Activated naive CD4-positive, alpha-beta T cell treated with anti-CD3 and anti-CD28 coated beads, Interleukin-2, amount 10 ng/mL, durations not matched to agents 7 days and 5 days (primary cell): ENCODE measurements at regions of chr18 and their contacts with region 1.

Region 1: DNA sequence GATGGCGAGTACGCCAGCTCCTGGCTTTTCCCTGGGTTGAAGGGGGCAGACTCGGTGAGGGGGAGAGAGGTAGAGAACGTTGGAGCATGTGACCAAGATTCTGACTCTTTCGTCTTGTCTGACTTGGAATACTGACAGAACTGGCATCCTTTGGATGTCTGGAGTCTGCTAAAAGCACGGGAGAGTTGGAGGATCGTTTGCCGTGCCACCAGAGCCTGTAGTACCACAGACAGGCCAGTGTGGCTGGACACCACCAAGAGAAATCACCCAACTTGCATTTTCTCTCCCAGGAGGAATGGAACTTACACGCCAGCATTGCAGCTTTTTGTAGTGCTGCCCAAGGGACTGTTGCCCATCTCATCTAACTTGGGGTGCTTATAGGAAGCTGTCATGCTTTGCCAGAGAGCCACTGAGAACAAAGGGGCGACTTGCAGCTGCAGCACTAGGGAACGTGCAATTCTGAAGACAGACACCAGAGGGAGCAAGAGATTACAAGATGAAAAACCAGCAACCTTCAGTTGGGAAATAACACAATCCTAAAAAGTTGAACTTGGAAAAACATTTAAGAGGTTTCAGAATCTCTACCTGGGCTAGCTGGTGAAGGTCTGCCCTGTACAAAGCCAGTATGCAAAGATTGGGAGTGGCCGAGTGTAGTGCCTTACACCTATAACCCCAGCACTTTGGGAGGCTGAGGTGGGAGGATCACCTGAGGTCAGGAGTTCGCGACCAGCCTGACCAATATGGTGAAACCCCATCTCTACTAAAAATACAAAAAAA is 24.1 kb downstream of the PSMG2 start:
- DNase-seq: peak; percentile 68
- H3K4me3 Mint-ChIP-seq: no peak overlapping the region
- H3K27ac Mint-ChIP-seq: no peak overlapping the region
- H3K4me1 Mint-ChIP-seq: peaks cover 2% of the 10 kb centered on the region
- H3K27me3 Mint-ChIP-seq: no peaks in the 10 kb centered on the region

Region 2: GRCh38 chr18:12470382-12471075 is 256.4 kb before region 1 on chr18:
- CTCF ChIA-PET with region 1: no interaction called
- DNase-seq: no peak
- H3K4me3 Mint-ChIP-seq: no peak overlapping the region
- H3K27ac Mint-ChIP-seq: no peak overlapping the region
- H3K4me1 Mint-ChIP-seq: no peaks in the 10 kb centered on the region
- H3K27me3 Mint-ChIP-seq: peaks cover 5% of the 10 kb centered on the region

Region 3: DNA sequence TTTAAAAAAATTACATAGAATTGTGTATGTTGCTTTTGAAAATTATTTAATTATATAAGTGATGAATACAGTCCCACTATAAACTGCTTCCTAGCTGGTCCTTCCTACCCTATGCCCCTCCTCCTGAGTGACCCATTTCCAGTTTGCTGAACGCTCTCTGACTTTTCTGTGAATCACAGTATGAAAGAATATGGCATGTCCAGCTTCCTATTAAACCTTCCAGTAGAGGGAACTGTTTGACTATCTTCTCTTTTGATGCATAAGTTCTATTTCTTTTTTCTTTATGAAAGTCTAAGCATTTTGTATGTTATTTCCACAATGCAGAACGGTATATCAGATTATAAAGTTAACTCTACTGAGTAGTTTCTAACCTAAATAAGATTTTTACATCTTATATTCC is 17.1 kb after region 1 on chr18:
- CTCF ChIA-PET with region 1: interaction called, 13 read pairs
- DNase-seq: no peak
- H3K4me3 Mint-ChIP-seq: no peak overlapping the region
- H3K27ac Mint-ChIP-seq: no peak overlapping the region
- H3K4me1 Mint-ChIP-seq: peaks cover 2% of the 10 kb centered on the region
- H3K27me3 Mint-ChIP-seq: peaks cover 9% of the 10 kb centered on the region

Region 4: DNA sequence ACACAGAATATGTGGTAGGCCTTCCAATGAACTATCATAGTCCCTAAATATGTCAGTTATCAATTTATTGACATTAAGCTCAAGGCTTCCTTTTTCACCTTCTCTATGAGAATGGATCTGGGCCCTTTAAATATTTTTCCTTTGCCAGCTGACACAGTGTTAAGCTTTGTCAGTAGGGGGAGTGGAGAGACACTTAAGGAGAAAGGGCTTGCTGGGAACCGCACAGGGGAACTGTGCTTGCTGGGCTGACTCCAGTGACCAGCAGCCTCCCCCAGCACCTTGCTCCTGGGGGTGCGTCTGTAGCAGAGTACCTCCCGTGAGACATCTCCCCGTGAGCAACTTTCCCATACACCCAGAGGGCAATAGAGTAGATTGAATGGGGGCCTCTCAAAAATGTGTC is 163.5 kb after region 1 on chr18:
- CTCF ChIA-PET with region 1: interaction called, 37 read pairs
- DNase-seq: no peak
- H3K4me3 Mint-ChIP-seq: no peak overlapping the region
- H3K27ac Mint-ChIP-seq: no peak overlapping the region
- H3K4me1 Mint-ChIP-seq: peaks cover 13% of the 10 kb centered on the region
- H3K27me3 Mint-ChIP-seq: peaks cover 33% of the 10 kb centered on the region

Region 5: GRCh38 chr18:12904012-12904516 is 177.1 kb after region 1 on chr18:
- CTCF ChIA-PET with region 1: interaction called, 11 read pairs
- DNase-seq: peak; percentile 78
- H3K4me3 Mint-ChIP-seq: peak overlapping the region; percentile 42
- H3K27ac Mint-ChIP-seq: peak overlapping the region; percentile 77
- H3K4me1 Mint-ChIP-seq: peaks cover 10% of the 10 kb centered on the region
- H3K27me3 Mint-ChIP-seq: peaks cover 36% of the 10 kb centered on the region

Region 6: DNA sequence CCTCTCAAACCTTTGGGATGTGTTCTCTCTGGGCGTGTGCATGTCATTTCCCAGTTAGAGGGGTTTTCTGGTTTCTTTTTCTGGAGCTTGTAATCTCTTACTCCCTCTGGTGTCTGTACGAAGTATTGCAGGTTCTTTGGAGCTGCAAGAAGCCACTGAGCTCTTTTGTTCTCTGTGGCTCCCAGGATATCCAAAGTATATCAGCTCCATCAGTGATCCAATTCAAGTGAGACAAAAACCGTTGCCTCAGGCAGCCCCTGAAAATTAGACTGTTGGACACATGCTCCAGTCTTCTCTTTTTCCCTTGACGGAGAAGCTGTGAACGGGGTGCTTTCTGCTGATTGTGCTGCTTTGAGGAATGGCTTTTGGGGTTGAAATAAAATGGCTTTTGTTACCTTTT is 432.6 kb after region 1 on chr18:
- CTCF ChIA-PET with region 1: interaction called, 13 read pairs
- DNase-seq: peak; percentile 33
- H3K4me3 Mint-ChIP-seq: no peak overlapping the region
- H3K27ac Mint-ChIP-seq: no peak overlapping the region
- H3K4me1 Mint-ChIP-seq: peaks cover 2% of the 10 kb centered on the region
- H3K27me3 Mint-ChIP-seq: peaks cover 18% of the 10 kb centered on the region